ENCODE measurements at regions of chr7 and their contacts with region 1.

Region 1: GRCh38 chr7:27825891-27826290 is 85.9 kb downstream of the TAX1BP1 start:
- DNase-seq: no peak
- H3K4me3 Mint-ChIP-seq: no peak overlapping the region
- H3K27ac Mint-ChIP-seq: no peak overlapping the region
- H3K4me1 Mint-ChIP-seq: no peaks in the 10 kb centered on the region
- H3K27me3 Mint-ChIP-seq: no peaks in the 10 kb centered on the region

Region 2: DNA sequence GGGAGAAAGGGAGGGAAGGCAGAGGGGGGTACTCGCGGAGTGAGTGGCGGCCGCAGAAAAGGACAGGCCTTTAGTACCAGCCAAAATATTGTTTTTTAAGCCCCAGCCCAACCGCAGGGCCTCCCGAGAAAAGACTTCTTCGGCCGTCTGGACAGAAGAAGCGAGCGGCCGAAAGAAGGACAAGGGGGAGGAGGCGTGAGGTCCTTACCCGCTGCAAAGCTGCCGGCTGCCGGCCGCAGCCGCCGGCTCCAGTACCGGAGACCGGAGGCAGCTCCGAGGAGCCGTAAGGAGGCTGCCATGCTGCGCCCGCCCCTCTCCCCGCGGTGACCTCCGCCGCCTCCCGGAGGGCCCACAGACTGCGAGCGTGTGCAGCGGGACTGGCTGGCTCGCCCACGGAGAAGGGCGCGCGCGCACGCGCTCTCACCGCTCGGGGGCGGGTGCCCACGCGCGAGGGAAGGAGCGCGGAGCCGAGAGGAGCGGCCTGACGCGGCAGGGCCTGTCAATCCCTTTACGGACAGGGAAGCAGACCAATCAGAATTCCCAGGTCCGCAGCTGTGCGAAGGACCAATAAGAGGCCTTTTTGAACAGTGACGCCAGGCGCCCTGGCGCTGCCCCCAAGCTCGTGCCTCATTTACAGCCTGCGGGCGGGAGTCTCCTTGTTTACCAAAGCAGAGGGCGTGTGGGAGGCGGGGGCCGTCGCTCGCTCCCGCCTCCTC is 163.2 kb before region 1 on chr7 and contains the start of gene HIBADH:
- CTCF ChIA-PET with region 1: no interaction called
- POLR2A ChIA-PET with region 1: no interaction called
- intact Hi-C with region 1: no loop called
- DNase-seq: peak; percentile 96
- H3K4me3 Mint-ChIP-seq: peak within 1 kb of the TSS; percentile 76
- H3K27ac Mint-ChIP-seq: peak within 1 kb of the TSS; percentile 76
- H3K4me1 Mint-ChIP-seq: peaks cover 14% of the 10 kb centered on the region
- H3K27me3 Mint-ChIP-seq: no peaks in the 10 kb centered on the region
- total RNA-seq, gene HIBADH: 21.9 to 22.6 TPM

Region 3: GRCh38 chr7:27799212-27799611 is 26.7 kb before region 1 on chr7:
- CTCF ChIA-PET with region 1: no interaction called
- POLR2A ChIA-PET with region 1: no interaction called
- intact Hi-C with region 1: loop called (anchors 1 kb)
- DNase-seq: no peak
- H3K4me3 Mint-ChIP-seq: no peak overlapping the region
- H3K27ac Mint-ChIP-seq: no peak overlapping the region
- H3K4me1 Mint-ChIP-seq: no peaks in the 10 kb centered on the region
- H3K27me3 Mint-ChIP-seq: no peaks in the 10 kb centered on the region

Region 4: GRCh38 chr7:27810186-27810585 is 15.7 kb before region 1 on chr7:
- CTCF ChIA-PET with region 1: no interaction called
- POLR2A ChIA-PET with region 1: no interaction called
- intact Hi-C with region 1: no loop called
- DNase-seq: no peak
- H3K4me3 Mint-ChIP-seq: no peak overlapping the region
- H3K27ac Mint-ChIP-seq: no peak overlapping the region
- H3K4me1 Mint-ChIP-seq: no peaks in the 10 kb centered on the region
- H3K27me3 Mint-ChIP-seq: no peaks in the 10 kb centered on the region